ENCODE measurements at regions of chr15 and their contacts with region 1.

Region 1: DNA sequence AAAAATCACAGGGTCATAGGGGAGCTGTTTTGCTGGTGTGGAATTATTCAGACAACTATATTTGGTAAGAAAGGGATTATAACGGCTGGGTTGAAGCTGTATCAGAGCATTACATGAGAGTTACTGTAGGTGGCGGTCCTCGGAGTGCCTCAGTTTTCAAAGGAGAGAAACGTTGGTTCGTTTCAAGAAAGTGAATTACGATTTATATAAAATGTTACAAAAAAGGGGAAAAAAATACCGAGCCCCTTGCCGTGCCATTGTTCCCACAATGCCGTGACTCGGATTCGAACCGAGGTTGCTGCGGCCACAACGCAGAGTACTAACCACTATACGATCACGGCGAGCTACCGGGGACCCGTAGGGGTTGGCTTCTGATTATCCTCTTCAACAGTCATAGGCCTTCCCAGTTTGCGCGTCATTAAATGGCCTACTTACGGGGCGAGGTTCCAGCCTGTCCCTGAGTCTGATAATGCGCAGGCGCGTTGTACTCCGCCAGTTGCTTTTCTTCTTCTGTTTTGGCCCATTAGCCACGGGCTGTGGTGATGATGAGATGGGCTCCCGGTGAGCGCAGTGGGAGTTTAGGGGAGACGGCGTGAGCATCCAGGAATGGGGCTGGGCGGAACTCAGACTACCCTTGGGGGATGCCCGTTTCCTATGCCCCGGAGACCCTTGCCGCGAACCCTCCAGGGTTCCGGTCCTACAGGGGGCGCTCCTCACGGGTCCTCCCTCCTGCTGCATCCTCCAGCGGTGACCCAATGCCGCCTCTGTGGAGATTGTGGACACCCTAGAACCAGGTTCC is 10.8 kb upstream of the SHF start:
- DNase-seq: peak; percentile 95
- H3K4me3 Mint-ChIP-seq: no peak overlapping the region
- H3K27ac Mint-ChIP-seq: no peak overlapping the region
- H3K4me1 Mint-ChIP-seq: peaks cover 20% of the 10 kb centered on the region
- H3K27me3 Mint-ChIP-seq: peaks cover 2% of the 10 kb centered on the region

Region 2: DNA sequence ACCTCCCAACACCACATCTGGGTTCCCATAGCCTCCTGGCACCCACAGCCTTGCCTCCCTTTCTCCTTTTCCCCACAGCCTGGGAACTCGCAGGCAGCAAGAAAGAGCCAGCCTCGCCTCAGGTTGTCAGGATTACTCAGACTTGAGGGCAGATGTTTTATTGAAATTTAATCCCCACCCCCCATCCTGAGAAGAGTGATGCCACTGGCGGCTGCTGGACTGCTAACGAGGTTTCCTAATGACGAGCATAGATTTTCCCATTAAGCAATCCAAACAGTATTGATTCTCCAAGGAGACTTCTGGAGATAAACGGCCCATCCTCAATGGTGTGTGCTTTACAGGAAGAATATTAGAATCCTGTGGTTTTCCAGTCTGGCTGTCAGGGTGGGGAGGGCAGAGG is 24.5 kb before region 1 on chr15:
- CTCF ChIA-PET with region 1: interaction called, 10 read pairs
- POLR2A ChIA-PET with region 1: interaction called, 3 read pairs
- DNase-seq: no peak
- H3K4me3 Mint-ChIP-seq: no peak overlapping the region
- H3K27ac Mint-ChIP-seq: no peak overlapping the region
- H3K4me1 Mint-ChIP-seq: no peaks in the 10 kb centered on the region
- H3K27me3 Mint-ChIP-seq: no peaks in the 10 kb centered on the region

Region 3: GRCh38 chr15:45187894-45188830 is 10.4 kb before region 1 on chr15 and contains the start of gene SHF:
- CTCF ChIA-PET with region 1: interaction called, 13 read pairs
- POLR2A ChIA-PET with region 1: no interaction called
- DNase-seq: peak; percentile 39
- H3K4me3 Mint-ChIP-seq: peak within 1 kb of the TSS; percentile 74
- H3K27ac Mint-ChIP-seq: peak within 1 kb of the TSS; percentile 73
- H3K4me1 Mint-ChIP-seq: peaks cover 12% of the 10 kb centered on the region
- H3K27me3 Mint-ChIP-seq: peaks cover 22% of the 10 kb centered on the region
- total RNA-seq, gene SHF: 0.79 to 0.92 TPM

Measured in activated CD4-positive, alpha-beta T cell treated with anti-CD3 and anti-CD28 coated beads, Interleukin-2, amount 10 ng/mL, durations not matched to agents 7 days and 5 days (primary cell).